T-cell (primary cell): ENCODE measurements at regions of chr7 and their contacts with region 1.

Region 1: GRCh38 chr7:341841-342638 is 52.1 kb downstream of the FOXL3 start:
- DNase-seq: no peak
- ATAC-seq: no peak
- H3K4me3 ChIP-seq: no peak overlapping the region
- H3K4me3 Mint-ChIP-seq: no peak overlapping the region
- H3K27ac ChIP-seq: no peak overlapping the region
- H3K27ac Mint-ChIP-seq: no peak overlapping the region
- H3K4me1 ChIP-seq: peaks cover 4 to 13% of the 10 kb centered on the region in 2 experiments
- H3K4me1 Mint-ChIP-seq: peaks cover 3 to 18% (median 3%) of the 10 kb centered on the region in 3 donors
- H3K27me3 ChIP-seq: peaks cover 0 to 20% of the 10 kb centered on the region in 2 experiments
- H3K27me3 Mint-ChIP-seq: peaks cover 0 to 3% of the 10 kb centered on the region in 2 donors

Region 2: DNA sequence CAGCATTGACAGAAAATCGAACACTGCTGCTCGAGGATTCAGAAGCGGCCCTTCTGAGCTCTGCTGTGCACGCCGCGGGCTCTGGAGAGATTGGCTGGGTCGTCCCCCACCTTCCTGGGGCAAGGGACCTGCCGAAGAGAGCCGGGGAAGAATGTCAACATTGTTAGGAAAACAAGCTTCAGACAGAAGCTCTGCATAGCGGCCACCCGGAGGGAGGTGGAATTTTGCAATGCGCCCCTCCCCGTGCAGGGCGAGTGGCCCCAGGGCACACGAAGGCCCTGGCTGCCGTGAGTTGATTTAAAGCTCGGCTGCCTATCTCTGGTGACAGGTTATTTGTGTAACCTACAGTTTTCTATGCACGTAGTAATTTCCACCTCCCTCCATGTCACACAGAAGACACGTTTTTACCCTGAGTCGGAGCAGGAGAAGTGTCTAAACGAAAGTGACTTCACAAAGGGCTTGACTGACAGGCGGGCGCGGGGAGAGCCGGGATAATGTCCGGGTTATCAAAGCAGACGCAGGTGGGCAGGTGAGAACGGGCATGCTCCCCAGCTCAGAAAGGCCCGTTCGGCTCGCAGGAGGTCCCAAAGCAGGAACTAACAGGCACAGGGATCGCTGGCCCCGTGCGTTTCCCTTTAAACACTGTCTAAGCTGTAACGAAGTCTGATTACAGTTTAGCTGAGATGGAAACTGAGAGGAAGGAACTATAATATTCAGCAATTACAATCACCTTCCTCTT is 93.0 kb after region 1 on chr7:
- CTCF ChIA-PET with region 1: no interaction called
- POLR2A ChIA-PET with region 1: no interaction called
- DNase-seq: peak in 2 of 35 experiments; percentile 17
- ATAC-seq: no peak
- H3K4me3 ChIP-seq: peak overlapping the region in 1 of 2 donors; percentile 2
- H3K4me3 Mint-ChIP-seq: peak overlapping the region in 2 of 3 donors; percentile 60 to 65
- H3K27ac ChIP-seq: no peak overlapping the region
- H3K27ac Mint-ChIP-seq: peak overlapping the region in 1 of 2 donors; percentile 48
- H3K4me1 ChIP-seq: peaks cover 0 to 9% of the 10 kb centered on the region in 2 experiments
- H3K4me1 Mint-ChIP-seq: peaks cover 0 to 4% (median 0%) of the 10 kb centered on the region in 3 donors
- H3K27me3 ChIP-seq: peaks cover 0 to 19% of the 10 kb centered on the region in 2 experiments
- H3K27me3 Mint-ChIP-seq: no peaks in the 10 kb centered on the region

Region 3: GRCh38 chr7:455110-455928 is 113.3 kb after region 1 on chr7:
- CTCF ChIA-PET with region 1: no interaction called
- POLR2A ChIA-PET with region 1: no interaction called
- DNase-seq: no peak
- ATAC-seq: no peak
- H3K4me3 ChIP-seq: no peak overlapping the region
- H3K4me3 Mint-ChIP-seq: no peak overlapping the region
- H3K27ac ChIP-seq: no peak overlapping the region
- H3K27ac Mint-ChIP-seq: no peak overlapping the region
- H3K4me1 ChIP-seq: peaks cover 2 to 23% of the 10 kb centered on the region in 2 experiments
- H3K4me1 Mint-ChIP-seq: peaks cover 8 to 11% (median 10%) of the 10 kb centered on the region in 3 donors
- H3K27me3 ChIP-seq: peaks cover 0 to 44% of the 10 kb centered on the region in 2 experiments
- H3K27me3 Mint-ChIP-seq: peaks cover 0 to 25% of the 10 kb centered on the region in 2 donors

Region 4: GRCh38 chr7:873367-874002 is 531.4 kb after region 1 on chr7:
- CTCF ChIA-PET with region 1: interaction called in 1 of 2 experiments, 10 read pairs
- POLR2A ChIA-PET with region 1: no interaction called
- DNase-seq: peak; percentile 27 to 82 (median 49)
- ATAC-seq: peak; percentile 17 to 31 (median 22)
- H3K4me3 ChIP-seq: no peak overlapping the region
- H3K4me3 Mint-ChIP-seq: no peak overlapping the region
- H3K27ac ChIP-seq: no peak overlapping the region
- H3K27ac Mint-ChIP-seq: peak overlapping the region; percentile 71
- H3K4me1 ChIP-seq: peaks cover 8 to 28% of the 10 kb centered on the region in 2 experiments
- H3K4me1 Mint-ChIP-seq: peaks cover 18 to 24% (median 22%) of the 10 kb centered on the region in 3 donors
- H3K27me3 ChIP-seq: no peaks in the 10 kb centered on the region
- H3K27me3 Mint-ChIP-seq: no peaks in the 10 kb centered on the region